Activated CD8-positive, alpha-beta memory T cell treated with anti-CD3 and anti-CD28 coated beads, Interleukin-2, amount 10 ng/mL, durations not matched to agents 7 days and 5 days (primary cell): ENCODE measurements at regions of chr15 and their contacts with region 1.

Region 1: GRCh38 chr15:81265944-81266775 is 57.8 kb downstream of the STARD5 start:
- DNase-seq: peak; percentile 90
- ATAC-seq: peak; percentile 96
- H3K4me3 Mint-ChIP-seq: peak overlapping the region; percentile 33
- H3K27ac Mint-ChIP-seq: peak overlapping the region; percentile 67
- H3K4me1 Mint-ChIP-seq: peaks cover 34% of the 10 kb centered on the region
- H3K27me3 Mint-ChIP-seq: peaks cover 11% of the 10 kb centered on the region

Region 2: DNA sequence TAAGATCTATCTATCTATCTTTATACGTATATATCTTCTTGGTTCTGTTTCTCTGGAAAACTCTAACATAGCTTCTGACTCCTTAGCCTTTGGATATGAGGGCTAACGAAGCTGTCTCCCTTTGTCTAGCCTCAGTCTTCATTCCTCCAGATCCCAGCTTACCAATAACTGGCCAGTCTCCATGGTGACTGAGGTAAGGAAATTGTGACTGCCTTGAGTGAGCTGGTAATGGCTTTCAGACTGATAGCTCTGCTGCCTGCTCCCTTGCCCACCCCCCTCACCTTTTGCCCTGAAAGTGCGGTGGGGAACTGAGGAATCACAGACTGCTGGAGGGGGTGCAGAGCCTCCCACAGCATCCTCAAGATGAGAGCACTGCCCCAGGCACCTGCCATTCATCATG is 636.8 kb before region 1 on chr15:
- CTCF ChIA-PET with region 1: no interaction called
- DNase-seq: peak; percentile 19
- ATAC-seq: no peak
- H3K4me3 Mint-ChIP-seq: no peak overlapping the region
- H3K27ac Mint-ChIP-seq: no peak overlapping the region
- H3K4me1 Mint-ChIP-seq: no peaks in the 10 kb centered on the region
- H3K27me3 Mint-ChIP-seq: peaks cover 15% of the 10 kb centered on the region

Region 3: DNA sequence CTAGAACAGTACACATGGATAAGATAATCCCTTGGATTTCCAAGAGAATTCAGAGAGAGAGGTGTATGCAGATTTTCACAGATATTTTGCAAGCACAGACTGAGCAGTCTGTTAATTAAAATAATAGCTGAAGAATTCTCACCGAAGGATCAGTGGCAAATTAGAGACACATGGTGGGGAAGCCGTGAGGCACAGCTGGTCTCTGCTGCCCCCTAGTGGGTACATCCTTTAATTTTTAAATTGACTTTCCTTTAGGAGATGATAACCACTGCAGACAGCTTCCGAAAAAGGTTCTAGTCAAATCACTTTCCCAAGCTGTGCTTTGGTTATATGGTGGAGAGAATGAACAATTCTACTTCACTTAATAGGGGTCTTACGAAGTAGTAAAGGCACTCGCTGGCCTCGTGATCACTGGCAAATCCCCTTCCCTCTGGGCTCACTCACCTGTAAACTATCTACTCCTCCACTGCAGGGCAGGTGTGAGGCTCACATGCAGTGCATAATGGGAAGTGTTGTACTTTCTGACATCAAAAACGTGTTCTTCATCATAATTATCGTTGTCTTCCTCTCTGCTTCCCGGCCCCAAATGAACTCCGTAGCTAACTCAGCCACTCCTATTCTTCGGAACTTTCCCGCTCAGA is 296.0 kb before region 1 on chr15:
- CTCF ChIA-PET with region 1: interaction called, 37 read pairs
- DNase-seq: peak; percentile 61
- ATAC-seq: peak; percentile 57
- H3K4me3 Mint-ChIP-seq: no peak overlapping the region
- H3K27ac Mint-ChIP-seq: no peak overlapping the region
- H3K4me1 Mint-ChIP-seq: peaks cover 3% of the 10 kb centered on the region
- H3K27me3 Mint-ChIP-seq: no peaks in the 10 kb centered on the region

Region 4: GRCh38 chr15:81074773-81075172 is 191.4 kb before region 1 on chr15:
- CTCF ChIA-PET with region 1: interaction called, 11 read pairs
- DNase-seq: no peak
- ATAC-seq: no peak
- H3K4me3 Mint-ChIP-seq: no peak overlapping the region
- H3K27ac Mint-ChIP-seq: peak overlapping the region; percentile 67
- H3K4me1 Mint-ChIP-seq: peaks cover 26% of the 10 kb centered on the region
- H3K27me3 Mint-ChIP-seq: peaks cover 2% of the 10 kb centered on the region

Region 5: DNA sequence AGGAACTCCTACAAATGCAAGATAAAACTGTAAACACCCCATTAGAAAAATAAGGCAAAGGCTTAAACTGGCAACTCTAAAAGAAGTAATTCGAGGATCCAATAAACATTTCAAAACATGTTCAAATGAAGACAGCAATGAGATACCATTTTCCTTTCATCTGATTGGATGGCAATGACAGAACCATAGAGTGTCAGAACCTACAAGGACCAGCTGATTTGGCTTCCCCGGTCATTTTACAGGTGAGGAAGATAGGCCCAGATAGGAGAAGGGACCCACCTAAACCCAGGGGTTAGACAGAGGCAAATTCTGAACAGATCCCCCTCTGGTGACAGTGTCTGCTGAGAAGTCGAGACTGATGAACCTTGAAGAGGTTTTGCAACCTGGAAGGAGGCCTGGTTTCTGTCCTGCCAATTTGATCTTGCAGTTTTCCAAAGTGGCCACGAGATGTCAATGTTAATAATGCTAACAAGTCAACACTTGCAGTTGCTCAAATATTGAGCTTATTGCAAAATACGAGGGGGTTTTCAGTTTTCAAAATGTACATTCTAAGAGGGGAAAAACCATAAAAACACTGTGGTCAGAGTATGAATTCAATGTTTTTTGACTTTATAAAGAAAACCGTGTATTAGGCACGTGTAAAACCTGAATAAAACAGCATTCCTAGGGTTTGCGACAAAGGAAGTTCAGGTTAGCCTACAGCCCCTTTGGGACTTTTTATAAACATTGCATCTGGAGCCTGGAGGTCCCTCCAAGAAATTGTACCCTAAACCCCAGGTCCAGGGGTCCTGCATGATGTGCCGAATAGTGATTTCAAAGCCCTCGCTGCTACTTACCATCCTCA is 110.6 kb before region 1 on chr15:
- CTCF ChIA-PET with region 1: interaction called, 180 read pairs
- DNase-seq: no peak
- ATAC-seq: peak; percentile 55
- H3K4me3 Mint-ChIP-seq: no peak overlapping the region
- H3K27ac Mint-ChIP-seq: no peak overlapping the region
- H3K4me1 Mint-ChIP-seq: peaks cover 2% of the 10 kb centered on the region
- H3K27me3 Mint-ChIP-seq: peaks cover 5% of the 10 kb centered on the region

Region 6: DNA sequence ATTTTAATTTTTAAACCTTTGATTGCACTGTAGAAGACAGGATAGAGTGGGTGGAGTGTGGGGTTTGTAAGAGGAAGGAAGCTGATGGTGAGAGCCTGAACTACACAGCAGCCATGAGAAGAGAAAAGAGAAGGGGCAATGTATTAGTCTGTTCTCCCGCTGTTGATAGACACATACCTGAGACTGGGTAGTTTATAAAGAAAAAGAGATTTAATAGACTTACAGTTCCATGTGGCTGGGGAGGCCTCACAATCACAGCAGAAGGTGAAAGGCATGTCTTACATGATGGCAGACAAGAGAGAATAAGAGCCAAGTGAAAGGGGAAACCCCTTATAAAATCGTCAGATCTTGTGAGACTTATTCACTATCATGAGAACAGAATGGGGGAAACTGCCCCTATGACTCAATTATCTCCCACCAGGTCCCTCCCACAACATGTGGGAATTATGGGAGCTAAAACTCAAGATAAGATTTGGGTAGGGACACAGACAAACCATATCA is 20.5 kb after region 1 on chr15:
- CTCF ChIA-PET with region 1: interaction called, 36 read pairs
- DNase-seq: no peak
- ATAC-seq: peak; percentile 87
- H3K4me3 Mint-ChIP-seq: peak overlapping the region; percentile 11
- H3K27ac Mint-ChIP-seq: peak overlapping the region; percentile 59
- H3K4me1 Mint-ChIP-seq: peaks cover 40% of the 10 kb centered on the region
- H3K27me3 Mint-ChIP-seq: no peaks in the 10 kb centered on the region

Region 7: GRCh38 chr15:81336568-81336967 is 70.4 kb after region 1 on chr15:
- CTCF ChIA-PET with region 1: interaction called, 78 read pairs
- DNase-seq: peak; percentile 55
- ATAC-seq: peak; percentile 55
- H3K4me3 Mint-ChIP-seq: no peak overlapping the region
- H3K27ac Mint-ChIP-seq: no peak overlapping the region
- H3K4me1 Mint-ChIP-seq: peaks cover 17% of the 10 kb centered on the region
- H3K27me3 Mint-ChIP-seq: no peaks in the 10 kb centered on the region

Region 8: DNA sequence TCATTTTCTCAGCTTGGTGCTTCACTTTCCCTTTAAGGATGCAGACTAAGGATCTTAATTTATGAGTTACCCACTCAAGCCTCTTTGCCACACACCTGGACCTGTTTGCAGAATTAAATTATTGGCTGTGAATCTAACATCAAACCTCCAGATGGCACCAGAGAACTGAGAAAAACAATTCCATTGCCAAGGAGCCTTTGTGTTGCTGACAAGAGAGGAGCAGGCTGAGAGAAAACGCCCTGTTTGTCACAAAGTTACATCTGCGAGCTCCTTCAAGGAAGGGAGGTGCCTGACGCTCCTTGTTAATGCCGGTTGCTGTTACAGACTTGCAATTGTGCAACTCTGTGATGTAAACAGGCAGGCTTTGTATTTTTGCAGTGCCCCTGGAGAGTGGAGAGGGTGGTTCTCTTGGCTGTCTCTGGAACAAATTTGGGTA is 144.2 kb after region 1 on chr15:
- CTCF ChIA-PET with region 1: interaction called, 15 read pairs
- DNase-seq: no peak
- ATAC-seq: no peak
- H3K4me3 Mint-ChIP-seq: no peak overlapping the region
- H3K27ac Mint-ChIP-seq: no peak overlapping the region
- H3K4me1 Mint-ChIP-seq: peaks cover 8% of the 10 kb centered on the region
- H3K27me3 Mint-ChIP-seq: peaks cover 24% of the 10 kb centered on the region

Region 9: DNA sequence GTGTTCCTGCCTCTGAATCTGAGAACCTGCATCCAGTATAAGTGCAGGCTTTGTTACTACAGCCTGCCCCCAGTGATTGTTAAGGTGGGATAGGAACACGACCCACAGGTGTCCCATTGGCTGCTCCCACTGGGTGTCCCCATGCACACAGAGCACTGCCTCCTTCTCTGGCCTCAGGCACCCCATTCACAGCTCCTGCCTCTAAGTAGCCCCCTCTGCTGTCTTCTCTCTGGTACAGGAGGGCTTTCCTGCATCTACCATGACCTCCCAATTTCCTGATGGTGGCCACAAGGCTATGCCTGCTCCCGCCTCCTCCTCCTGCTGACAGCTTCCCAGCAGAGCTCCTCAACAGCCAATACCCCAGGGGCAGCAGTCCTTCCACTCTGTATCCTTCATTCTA is 346.5 kb after region 1 on chr15:
- CTCF ChIA-PET with region 1: no interaction called
- DNase-seq: no peak
- ATAC-seq: no peak
- H3K4me3 Mint-ChIP-seq: no peak overlapping the region
- H3K27ac Mint-ChIP-seq: no peak overlapping the region
- H3K4me1 Mint-ChIP-seq: no peaks in the 10 kb centered on the region
- H3K27me3 Mint-ChIP-seq: peaks cover 10% of the 10 kb centered on the region